AG04450 (cell line): ENCODE measurements at regions of chr18 and their contacts with region 1.

Region 1: DNA sequence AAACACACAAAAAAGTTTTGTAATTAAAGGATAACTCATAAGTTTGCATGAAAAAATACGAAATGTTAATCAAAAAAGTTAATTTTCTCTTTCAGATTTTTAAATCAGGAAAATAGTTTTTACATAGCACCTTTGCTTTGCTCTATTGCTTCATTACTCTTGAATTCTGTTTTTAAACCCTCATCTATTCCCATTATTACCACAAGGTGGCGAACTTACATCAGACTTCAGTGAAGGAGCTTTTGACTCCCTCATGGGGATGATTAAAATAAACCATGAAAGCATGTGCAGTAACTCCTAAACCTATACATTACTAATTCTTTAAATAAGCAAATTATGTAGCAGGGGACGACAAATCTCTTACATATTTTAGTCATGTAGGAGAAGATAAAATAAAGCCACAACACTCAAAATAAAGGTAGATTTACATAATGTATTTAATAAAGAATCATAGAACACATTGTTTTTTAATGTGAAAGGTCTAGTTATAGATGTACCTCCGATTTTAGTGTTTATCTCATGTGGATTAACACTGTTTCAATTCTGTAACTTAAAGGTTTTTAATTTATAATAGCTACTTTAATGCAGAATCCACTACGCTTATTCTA is 105.2 kb downstream of the NETO1 start:
- DNase-seq: peak; percentile 59
- H3K4me3 ChIP-seq: no peak overlapping the region
- H3K27ac ChIP-seq: no peak overlapping the region
- H3K27me3 ChIP-seq: no peaks in the 10 kb centered on the region
- CTCF ChIP-seq: peak; percentile 77

Region 2: GRCh38 chr18:72651033-72651432 is 111.6 kb before region 1 on chr18:
- CTCF ChIA-PET with region 1: no interaction called
- POLR2A ChIA-PET with region 1: no interaction called
- DNase-seq: no peak
- H3K4me3 ChIP-seq: no peak overlapping the region
- H3K27ac ChIP-seq: no peak overlapping the region
- H3K27me3 ChIP-seq: no peaks in the 10 kb centered on the region
- CTCF ChIP-seq: no peak

Region 3: GRCh38 chr18:73136134-73136533 is 373.5 kb after region 1 on chr18:
- CTCF ChIA-PET with region 1: interaction called, 28 read pairs
- POLR2A ChIA-PET with region 1: no interaction called
- DNase-seq: no peak
- H3K4me3 ChIP-seq: no peak overlapping the region
- H3K27ac ChIP-seq: no peak overlapping the region
- H3K27me3 ChIP-seq: no peaks in the 10 kb centered on the region
- CTCF ChIP-seq: peak; percentile 62

Region 4: GRCh38 chr18:74116633-74117554 is 1354.3 kb after region 1 on chr18:
- CTCF ChIA-PET with region 1: interaction called, 39 read pairs
- POLR2A ChIA-PET with region 1: no interaction called
- DNase-seq: peak; percentile 26
- H3K4me3 ChIP-seq: no peak overlapping the region
- H3K27ac ChIP-seq: peak overlapping the region; percentile 22
- H3K27me3 ChIP-seq: no peaks in the 10 kb centered on the region
- CTCF ChIP-seq: peak; percentile 84